ENCODE measurements at regions of chr17 and their contacts with region 1.

Region 1: GRCh38 chr17:34199932-34200534 is 55.1 kb upstream of the CCL2 start:
- DNase-seq: peak; percentile 62 to 66
- ATAC-seq: peak; percentile 86 to 93
- H3K4me3 ChIP-seq: no peak overlapping the region
- H3K27ac ChIP-seq: no peak overlapping the region
- H3K4me1 ChIP-seq: peaks cover 4% of the 10 kb centered on the region in 2 donors
- H3K27me3 ChIP-seq: peaks cover 0 to 12% (median 0%) of the 10 kb centered on the region in 3 donors
- CTCF ChIP-seq: peak; percentile 94 to 99 (median 96)
- POLR2A ChIP-seq: no peak

Region 2: DNA sequence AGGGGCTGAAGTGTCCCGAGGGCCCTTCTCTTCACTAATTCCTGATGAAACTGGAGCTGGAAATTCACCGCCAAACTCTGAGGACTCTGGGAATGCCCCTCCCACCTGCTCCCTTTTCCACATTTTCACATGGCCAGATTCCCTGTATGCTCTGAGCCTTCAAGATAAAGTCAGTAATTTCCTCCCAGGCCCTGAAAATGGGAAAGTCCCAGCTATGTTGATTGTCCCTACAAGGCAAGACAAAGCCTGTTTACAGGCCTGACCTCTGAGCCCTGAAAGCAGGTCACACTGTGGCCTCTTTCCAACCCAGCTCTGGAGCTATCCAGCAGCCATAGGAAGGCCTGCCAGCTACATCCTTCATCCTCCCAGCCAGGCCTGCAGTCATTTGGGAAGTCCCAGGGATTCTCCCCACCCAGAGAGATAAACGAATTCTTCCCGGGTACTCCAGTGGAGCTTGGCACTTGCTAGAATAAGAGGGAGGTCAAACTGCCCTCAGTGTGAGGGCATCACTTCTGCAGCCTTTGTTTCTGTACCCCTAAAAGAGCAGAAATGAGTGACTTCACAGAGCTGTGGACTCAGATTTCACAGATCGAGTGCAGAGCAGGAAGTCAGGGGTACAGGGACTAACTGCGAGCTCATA is 35.5 kb after region 1 on chr17:
- in situ Hi-C with region 1: no loop called
- intact Hi-C with region 1: loop called (anchors 5 kb)
- DNase-seq: peak; percentile 31 to 53
- ATAC-seq: peak; percentile 84 to 85
- H3K4me3 ChIP-seq: no peak overlapping the region
- H3K27ac ChIP-seq: peak overlapping the region; percentile 65 to 69 (median 67)
- H3K4me1 ChIP-seq: peaks cover 34 to 57% of the 10 kb centered on the region in 2 donors
- H3K27me3 ChIP-seq: no peaks in the 10 kb centered on the region
- CTCF ChIP-seq: no peak
- POLR2A ChIP-seq: no peak

Region 3: GRCh38 chr17:34306466-34306865 is 106.4 kb after region 1 on chr17:
- in situ Hi-C with region 1: loop called in 2 of 4 experiments (anchors 10 kb)
- intact Hi-C with region 1: loop called (anchors 1 kb)
- DNase-seq: peak in 1 of 2 donors; percentile 9
- ATAC-seq: peak; percentile 58 to 72
- H3K4me3 ChIP-seq: no peak overlapping the region
- H3K27ac ChIP-seq: peak overlapping the region in 1 of 4 donors; percentile 13
- H3K4me1 ChIP-seq: peaks cover 5 to 20% of the 10 kb centered on the region in 2 donors
- H3K27me3 ChIP-seq: no peaks in the 10 kb centered on the region
- CTCF ChIP-seq: peak in 3 of 5 experiments; percentile 26 to 37 (median 36)
- POLR2A ChIP-seq: no peak